ENCODE measurements at regions of chr12 and their contacts with region 1.

Region 1: DNA sequence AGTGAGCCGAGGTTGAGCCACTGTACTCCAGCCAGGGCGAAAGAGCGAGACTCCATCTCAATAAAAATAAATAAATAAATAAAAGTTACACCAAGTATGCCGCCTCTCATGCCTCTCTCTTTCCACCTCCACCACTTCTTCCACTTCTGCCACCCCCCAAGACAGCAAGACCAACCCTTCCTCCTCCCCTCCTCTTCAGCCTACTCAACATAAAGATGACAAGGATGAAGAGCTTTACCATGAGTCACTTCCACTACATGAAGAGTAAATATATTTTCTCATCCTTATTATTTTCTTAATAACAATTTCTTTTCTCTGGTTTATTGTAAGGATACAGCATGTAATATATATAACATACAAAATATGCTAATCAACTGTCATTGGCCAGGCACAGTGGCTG is 3.6 kb upstream of the TMED2 start:
- DNase-seq: no peak
- H3K4me3 ChIP-seq: no peak overlapping the region
- H3K27ac ChIP-seq: no peak overlapping the region
- H3K4me1 ChIP-seq: peaks cover 15% of the 10 kb centered on the region
- H3K27me3 ChIP-seq: no peaks in the 10 kb centered on the region
- CTCF ChIP-seq: no peak
- POLR2A ChIP-seq: no peak

Region 2: GRCh38 chr12:123365025-123365917 is 215.5 kb before region 1 on chr12:
- CTCF ChIA-PET with region 1: interaction called, 7 read pairs
- POLR2A ChIA-PET with region 1: no interaction called
- dilution Hi-C with region 1: no loop called
- intact Hi-C with region 1: loop called (anchors 1 kb)
- DNase-seq: peak; percentile 99
- H3K4me3 ChIP-seq: peak overlapping the region; percentile 47 to 93 (median 79)
- H3K27ac ChIP-seq: peak overlapping the region; percentile 75
- H3K4me1 ChIP-seq: peaks cover 13% of the 10 kb centered on the region
- H3K27me3 ChIP-seq: no peaks in the 10 kb centered on the region
- CTCF ChIP-seq: peak; percentile 78 to 82
- POLR2A ChIP-seq: peak; percentile 85

Region 3: GRCh38 chr12:123398550-123399254 is 182.1 kb before region 1 on chr12:
- CTCF ChIA-PET with region 1: interaction called, 4 read pairs
- POLR2A ChIA-PET with region 1: no interaction called
- dilution Hi-C with region 1: no loop called
- intact Hi-C with region 1: loop called (anchors 2 kb)
- DNase-seq: peak; percentile 87
- H3K4me3 ChIP-seq: no peak overlapping the region
- H3K27ac ChIP-seq: peak overlapping the region; percentile 14
- H3K4me1 ChIP-seq: peaks cover 11% of the 10 kb centered on the region
- H3K27me3 ChIP-seq: no peaks in the 10 kb centered on the region
- CTCF ChIP-seq: no peak
- POLR2A ChIP-seq: peak; percentile 17

Region 4: DNA sequence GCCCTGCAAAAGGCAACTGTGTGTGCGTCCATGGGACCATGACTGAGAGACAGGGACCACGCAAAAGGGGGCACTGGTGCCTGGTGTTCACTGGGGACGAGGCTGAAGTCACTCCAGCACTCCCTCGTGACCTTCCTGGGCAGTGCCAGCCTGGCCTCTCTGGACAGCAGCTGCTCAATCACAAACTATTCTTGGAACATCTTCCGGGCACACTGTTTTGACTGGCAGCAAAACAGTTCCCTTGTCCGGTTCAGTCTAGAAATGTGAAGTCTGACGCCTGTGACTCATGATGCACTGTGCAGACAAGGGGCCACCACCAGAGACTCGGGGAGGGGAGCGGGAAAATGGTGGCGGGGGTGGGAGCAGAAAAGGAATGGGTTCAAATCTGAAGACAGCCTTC is 102.0 kb before region 1 on chr12:
- CTCF ChIA-PET with region 1: interaction called, 8 read pairs
- POLR2A ChIA-PET with region 1: no interaction called
- dilution Hi-C with region 1: no loop called
- intact Hi-C with region 1: loop called (anchors 1 kb)
- DNase-seq: peak; percentile 94
- H3K4me3 ChIP-seq: no peak overlapping the region
- H3K27ac ChIP-seq: peak overlapping the region; percentile 83
- H3K4me1 ChIP-seq: peaks cover 20% of the 10 kb centered on the region
- H3K27me3 ChIP-seq: no peaks in the 10 kb centered on the region
- CTCF ChIP-seq: no peak
- POLR2A ChIP-seq: no peak

Region 5: GRCh38 chr12:123533672-123534643 is 46.8 kb before region 1 on chr12 and contains the start of gene RILPL1:
- CTCF ChIA-PET with region 1: interaction called, 10 read pairs
- POLR2A ChIA-PET with region 1: no interaction called
- dilution Hi-C with region 1: no loop called
- intact Hi-C with region 1: loop called (anchors 1 kb)
- DNase-seq: peak; percentile 50
- H3K4me3 ChIP-seq: peak within 1 kb of the TSS; percentile 35 to 81 (median 64)
- H3K27ac ChIP-seq: peak within 1 kb of the TSS; percentile 53
- H3K4me1 ChIP-seq: peaks cover 23% of the 10 kb centered on the region
- H3K27me3 ChIP-seq: peaks cover 0 to 1% of the 10 kb centered on the region in 2 experiments
- CTCF ChIP-seq: peak; percentile 9 to 41
- POLR2A ChIP-seq: no peak
- total RNA-seq, gene RILPL1: 29.7 and 30.4 TPM in 2 replicates

Region 6: GRCh38 chr12:123670882-123671728 is 90.3 kb after region 1 on chr12 and contains the start of gene TCTN2:
- CTCF ChIA-PET with region 1: no interaction called
- POLR2A ChIA-PET with region 1: no interaction called
- dilution Hi-C with region 1: no loop called
- intact Hi-C with region 1: no loop called
- DNase-seq: peak; percentile 93
- H3K4me3 ChIP-seq: peak within 1 kb of the TSS; percentile 55 to 79 (median 71)
- H3K27ac ChIP-seq: no peak within 1 kb of the TSS
- H3K4me1 ChIP-seq: peaks cover 2% of the 10 kb centered on the region
- H3K27me3 ChIP-seq: no peaks in the 10 kb centered on the region
- CTCF ChIP-seq: no peak
- POLR2A ChIP-seq: no peak
- total RNA-seq, gene TCTN2: 11.2 and 13.4 TPM in 2 replicates

Measured in endothelial cell of umbilical vein (primary cell).